IMR-90 (cell line): ENCODE measurements at regions of chr4 and their contacts with region 1.

Region 1: GRCh38 chr4:155819066-155819465 is 47.0 kb downstream of the ASIC5 start:
- DNase-seq: no peak
- ATAC-seq: no peak
- H3K4me3 ChIP-seq: no peak overlapping the region
- H3K27ac ChIP-seq: no peak overlapping the region
- H3K4me1 ChIP-seq: no peaks in the 10 kb centered on the region
- H3K27me3 ChIP-seq: no peaks in the 10 kb centered on the region
- CTCF ChIP-seq: no peak
- POLR2A ChIP-seq: no peak
- RAD21 ChIP-seq: no peak

Region 2: GRCh38 chr4:155703486-155704247 is 115.4 kb before region 1 on chr4:
- CTCF ChIA-PET with region 1: no interaction called
- POLR2A ChIA-PET with region 1: no interaction called
- dilution Hi-C with region 1: no loop called
- in situ Hi-C with region 1: no loop called
- intact Hi-C with region 1: no loop called
- DNase-seq: peak; percentile 47
- ATAC-seq: no peak
- H3K4me3 ChIP-seq: no peak overlapping the region
- H3K27ac ChIP-seq: no peak overlapping the region
- H3K4me1 ChIP-seq: 0 out of 2 replicates have a peak, but pooled peaks cover 1% of the 10 kb centered on the region
- H3K27me3 ChIP-seq: no peaks in the 10 kb centered on the region
- CTCF ChIP-seq: no peak
- POLR2A ChIP-seq: no peak
- RAD21 ChIP-seq: no peak

Region 3: GRCh38 chr4:156401371-156401770 is 582.3 kb after region 1 on chr4:
- CTCF ChIA-PET with region 1: no interaction called
- POLR2A ChIA-PET with region 1: no interaction called
- dilution Hi-C with region 1: no loop called
- in situ Hi-C with region 1: no loop called
- intact Hi-C with region 1: loop called (anchors 5 kb)
- DNase-seq: no peak
- ATAC-seq: no peak
- H3K4me3 ChIP-seq: no peak overlapping the region
- H3K27ac ChIP-seq: no peak overlapping the region
- H3K4me1 ChIP-seq: no peaks in the 10 kb centered on the region
- H3K27me3 ChIP-seq: no peaks in the 10 kb centered on the region
- CTCF ChIP-seq: no peak
- POLR2A ChIP-seq: no peak
- RAD21 ChIP-seq: no peak

Region 4: DNA sequence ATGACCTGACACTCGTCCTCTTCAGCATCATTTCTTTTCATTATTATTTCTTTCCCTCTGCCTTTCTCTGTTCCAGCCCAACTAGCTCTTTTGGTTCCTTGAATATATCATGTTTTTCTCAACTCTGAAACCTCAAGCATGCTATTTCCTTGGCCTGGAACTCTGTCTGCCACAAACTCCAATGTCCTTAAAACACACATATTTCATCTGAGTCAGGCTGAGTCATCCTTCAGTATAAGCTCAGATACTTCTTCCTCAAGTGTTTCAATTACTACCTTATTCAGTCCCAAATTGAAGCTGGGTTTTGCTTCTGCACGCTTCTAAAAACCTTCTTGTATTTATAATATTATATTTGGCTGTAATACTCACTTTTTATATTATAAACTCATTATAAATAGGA is 728.4 kb after region 1 on chr4:
- CTCF ChIA-PET with region 1: no interaction called
- POLR2A ChIA-PET with region 1: no interaction called
- dilution Hi-C with region 1: no loop called
- in situ Hi-C with region 1: no loop called
- intact Hi-C with region 1: no loop called
- DNase-seq: peak; percentile 97
- ATAC-seq: peak; percentile 96
- H3K4me3 ChIP-seq: no peak overlapping the region
- H3K27ac ChIP-seq: no peak overlapping the region
- H3K4me1 ChIP-seq: peaks cover 9% of the 10 kb centered on the region
- H3K27me3 ChIP-seq: no peaks in the 10 kb centered on the region
- CTCF ChIP-seq: no peak
- POLR2A ChIP-seq: no peak
- RAD21 ChIP-seq: no peak